ENCODE measurements at regions of chr6 and their contacts with region 1.

Region 1: GRCh38 chr6:150622941-150623874 is 23.5 kb downstream of the PLEKHG1 start:
- DNase-seq: peak; percentile 40
- ATAC-seq: peak; percentile 87
- H3K4me3 Mint-ChIP-seq: peak overlapping the region; percentile 19
- H3K27ac Mint-ChIP-seq: peak overlapping the region; percentile 94
- H3K4me1 Mint-ChIP-seq: peaks cover 97% of the 10 kb centered on the region
- H3K27me3 Mint-ChIP-seq: no peaks in the 10 kb centered on the region
- CTCF ChIP-seq: no peak

Region 2: DNA sequence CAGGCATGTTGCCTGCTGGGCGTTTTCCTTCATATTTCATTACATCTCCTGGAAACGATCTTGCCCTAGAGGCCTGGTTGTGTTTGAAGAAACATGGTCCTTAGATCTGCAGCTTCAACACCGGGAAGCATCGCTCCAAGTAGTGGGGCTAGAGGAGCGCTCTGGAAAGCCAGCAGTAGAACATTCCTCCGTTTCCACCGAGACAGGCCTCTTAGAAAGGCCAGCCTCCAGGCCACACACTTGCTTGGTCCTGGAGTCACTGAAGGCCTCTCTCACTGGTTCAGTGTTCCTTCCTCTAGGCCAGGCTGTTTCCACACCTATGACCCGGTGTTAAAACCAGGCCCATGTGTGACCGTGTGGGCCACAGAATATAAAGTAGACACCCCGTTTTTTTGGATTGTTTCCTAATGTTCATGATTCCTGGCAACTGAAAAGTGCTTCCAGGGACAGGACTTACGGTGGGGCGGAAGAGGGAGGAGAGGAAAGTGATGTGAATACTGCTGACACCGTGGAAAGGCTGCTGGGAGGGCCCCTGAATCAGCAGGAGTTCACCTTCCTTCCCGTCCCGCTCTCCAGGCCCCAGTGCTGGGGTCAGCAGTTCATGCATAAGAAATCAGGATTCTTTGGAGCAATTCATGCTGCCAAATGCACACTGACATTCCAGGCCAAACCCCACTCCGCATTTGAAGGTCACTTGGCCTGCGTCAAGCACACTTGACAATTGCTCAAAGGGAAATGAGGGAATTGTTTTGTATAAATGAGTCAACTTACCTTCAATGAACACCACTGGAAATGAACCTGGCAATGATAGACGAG is 170.6 kb before region 1 on chr6:
- CTCF ChIA-PET with region 1: no interaction called
- POLR2A ChIA-PET with region 1: no interaction called
- intact Hi-C with region 1: no loop called
- DNase-seq: no peak
- ATAC-seq: no peak
- H3K4me3 Mint-ChIP-seq: no peak overlapping the region
- H3K27ac Mint-ChIP-seq: no peak overlapping the region
- H3K4me1 Mint-ChIP-seq: no peaks in the 10 kb centered on the region
- H3K27me3 Mint-ChIP-seq: peaks cover 2% of the 10 kb centered on the region
- CTCF ChIP-seq: no peak

Region 3: GRCh38 chr6:150514599-150515401 is 108.4 kb before region 1 on chr6:
- CTCF ChIA-PET with region 1: no interaction called
- POLR2A ChIA-PET with region 1: no interaction called
- intact Hi-C with region 1: no loop called
- DNase-seq: no peak
- ATAC-seq: no peak
- H3K4me3 Mint-ChIP-seq: no peak overlapping the region
- H3K27ac Mint-ChIP-seq: no peak overlapping the region
- H3K4me1 Mint-ChIP-seq: no peaks in the 10 kb centered on the region
- H3K27me3 Mint-ChIP-seq: no peaks in the 10 kb centered on the region
- CTCF ChIP-seq: no peak

Region 4: DNA sequence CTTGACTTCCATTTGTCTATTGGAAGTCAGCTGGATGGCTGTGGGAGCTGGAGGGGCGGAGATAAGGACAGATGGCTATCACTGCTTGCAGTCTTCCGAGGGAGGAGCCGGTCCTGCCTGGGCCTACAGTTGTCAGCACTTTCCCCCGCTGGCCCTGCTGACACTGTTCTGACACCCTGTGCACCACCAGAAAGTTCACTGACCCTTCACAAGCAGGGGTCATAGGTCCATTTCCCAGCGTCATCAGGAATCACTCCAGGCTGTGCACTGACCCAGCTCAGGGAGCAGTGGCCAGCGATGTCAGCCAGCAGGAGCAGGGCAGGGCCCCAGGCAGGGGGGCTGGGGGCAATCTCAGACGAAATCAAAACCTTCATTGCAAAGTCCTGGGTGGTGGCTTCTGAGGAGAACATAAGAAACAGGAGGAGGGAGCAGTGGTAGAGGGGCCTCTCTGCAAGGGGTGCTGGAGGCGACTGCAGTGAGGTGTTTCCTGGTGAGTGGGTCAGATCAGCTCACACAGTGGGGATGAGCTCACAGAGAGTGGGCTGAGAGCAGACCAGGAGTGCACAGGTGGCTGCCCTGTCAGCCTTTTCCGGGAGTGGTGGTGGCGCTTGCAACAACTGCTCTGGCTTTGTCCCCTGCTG is 50.0 kb before region 1 on chr6:
- CTCF ChIA-PET with region 1: no interaction called
- POLR2A ChIA-PET with region 1: interaction called, 3 read pairs
- intact Hi-C with region 1: loop called (anchors 1 kb)
- DNase-seq: no peak
- ATAC-seq: no peak
- H3K4me3 Mint-ChIP-seq: no peak overlapping the region
- H3K27ac Mint-ChIP-seq: no peak overlapping the region
- H3K4me1 Mint-ChIP-seq: peaks cover 22% of the 10 kb centered on the region
- H3K27me3 Mint-ChIP-seq: peaks cover 50% of the 10 kb centered on the region
- CTCF ChIP-seq: no peak

Region 5: GRCh38 chr6:150590448-150590847 is 32.8 kb before region 1 on chr6:
- CTCF ChIA-PET with region 1: no interaction called
- POLR2A ChIA-PET with region 1: no interaction called
- intact Hi-C with region 1: no loop called
- DNase-seq: no peak
- ATAC-seq: peak; percentile 40
- H3K4me3 Mint-ChIP-seq: no peak overlapping the region
- H3K27ac Mint-ChIP-seq: no peak overlapping the region
- H3K4me1 Mint-ChIP-seq: peaks cover 14% of the 10 kb centered on the region
- H3K27me3 Mint-ChIP-seq: peaks cover 5% of the 10 kb centered on the region
- CTCF ChIP-seq: no peak

Region 6: GRCh38 chr6:150641398-150642139 is 18.4 kb after region 1 on chr6:
- CTCF ChIA-PET with region 1: interaction called, 4 read pairs
- POLR2A ChIA-PET with region 1: interaction called, 445 read pairs
- intact Hi-C with region 1: loop called (anchors 1 kb)
- DNase-seq: no peak
- ATAC-seq: peak; percentile 49
- H3K4me3 Mint-ChIP-seq: peak overlapping the region; percentile 77
- H3K27ac Mint-ChIP-seq: peak overlapping the region; percentile 91
- H3K4me1 Mint-ChIP-seq: peaks cover 90% of the 10 kb centered on the region
- H3K27me3 Mint-ChIP-seq: no peaks in the 10 kb centered on the region
- CTCF ChIP-seq: no peak

Region 7: DNA sequence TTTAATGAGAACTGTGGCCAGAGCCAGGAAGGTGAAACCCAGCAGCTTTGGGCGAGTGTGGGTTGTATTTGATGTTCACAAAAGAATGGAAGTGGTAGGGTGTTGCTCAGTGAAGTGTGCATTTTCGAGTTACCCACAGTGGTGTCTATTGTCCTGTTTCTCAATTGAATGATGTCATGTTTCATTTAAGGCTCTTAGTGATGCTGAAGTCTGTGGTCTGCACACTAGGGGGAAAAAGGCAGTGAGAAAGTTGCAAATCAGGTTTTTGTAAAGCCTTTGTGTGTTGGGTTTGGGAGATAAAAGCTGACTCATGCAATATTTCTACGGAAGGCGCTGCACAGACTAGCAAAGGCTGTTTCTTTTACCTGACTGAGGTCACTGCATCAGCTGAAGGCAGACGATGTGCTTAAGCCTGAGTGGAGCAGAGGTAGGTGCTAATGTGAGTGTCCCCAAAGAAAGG is 97.6 kb after region 1 on chr6:
- CTCF ChIA-PET with region 1: no interaction called
- POLR2A ChIA-PET with region 1: interaction called, 6 read pairs
- intact Hi-C with region 1: loop called (anchors 2 kb)
- DNase-seq: no peak
- ATAC-seq: peak; percentile 96
- H3K4me3 Mint-ChIP-seq: peak overlapping the region; percentile 25
- H3K27ac Mint-ChIP-seq: peak overlapping the region; percentile 80
- H3K4me1 Mint-ChIP-seq: peaks cover 74% of the 10 kb centered on the region
- H3K27me3 Mint-ChIP-seq: no peaks in the 10 kb centered on the region
- CTCF ChIP-seq: no peak

Region 8: GRCh38 chr6:150987371-150987828 is 364.2 kb after region 1 on chr6:
- CTCF ChIA-PET with region 1: no interaction called
- POLR2A ChIA-PET with region 1: no interaction called
- intact Hi-C with region 1: no loop called
- DNase-seq: no peak
- ATAC-seq: no peak
- H3K4me3 Mint-ChIP-seq: no peak overlapping the region
- H3K27ac Mint-ChIP-seq: no peak overlapping the region
- H3K4me1 Mint-ChIP-seq: no peaks in the 10 kb centered on the region
- H3K27me3 Mint-ChIP-seq: no peaks in the 10 kb centered on the region
- CTCF ChIP-seq: no peak